ENCODE measurements at regions of chr18 and their contacts with region 1.

Region 1: DNA sequence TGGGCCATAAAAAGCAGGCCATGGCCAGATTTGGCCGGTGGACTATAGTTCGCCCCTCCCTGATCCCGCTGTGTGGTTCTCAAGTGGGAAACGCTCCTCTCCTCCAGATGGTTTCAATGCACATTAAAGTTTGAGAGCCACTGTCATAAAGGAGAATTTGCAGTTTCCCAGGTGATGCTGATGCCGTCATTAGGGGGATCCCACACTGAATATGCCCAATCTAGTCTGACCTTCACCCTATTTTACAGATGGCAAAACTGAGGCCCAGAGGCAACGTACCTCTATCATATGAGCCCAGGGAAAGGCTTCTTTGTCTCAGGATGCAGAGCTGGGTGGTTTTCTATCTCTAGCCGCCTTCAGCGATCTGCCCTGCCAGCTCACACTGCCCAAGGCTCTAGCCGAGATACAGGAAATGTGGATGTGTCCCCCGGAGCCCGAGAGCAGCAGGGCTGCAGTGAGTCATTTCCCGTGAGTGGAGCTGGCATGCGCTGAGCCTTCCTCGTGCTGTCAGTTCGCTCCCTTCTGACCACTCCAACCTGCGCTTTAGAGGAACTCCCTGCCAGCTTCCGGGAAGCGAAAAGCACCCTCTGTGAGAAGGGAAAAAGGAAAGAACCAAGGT is 116.2 kb downstream of the SMAD7 start:
- DNase-seq: peak; percentile 71
- CTCF ChIP-seq: no peak

Region 2: GRCh38 chr18:48680339-48681221 is 153.9 kb before region 1 on chr18:
- CTCF ChIA-PET with region 1: no interaction called
- POLR2A ChIA-PET with region 1: no interaction called
- DNase-seq: no peak
- CTCF ChIP-seq: no peak

Region 3: DNA sequence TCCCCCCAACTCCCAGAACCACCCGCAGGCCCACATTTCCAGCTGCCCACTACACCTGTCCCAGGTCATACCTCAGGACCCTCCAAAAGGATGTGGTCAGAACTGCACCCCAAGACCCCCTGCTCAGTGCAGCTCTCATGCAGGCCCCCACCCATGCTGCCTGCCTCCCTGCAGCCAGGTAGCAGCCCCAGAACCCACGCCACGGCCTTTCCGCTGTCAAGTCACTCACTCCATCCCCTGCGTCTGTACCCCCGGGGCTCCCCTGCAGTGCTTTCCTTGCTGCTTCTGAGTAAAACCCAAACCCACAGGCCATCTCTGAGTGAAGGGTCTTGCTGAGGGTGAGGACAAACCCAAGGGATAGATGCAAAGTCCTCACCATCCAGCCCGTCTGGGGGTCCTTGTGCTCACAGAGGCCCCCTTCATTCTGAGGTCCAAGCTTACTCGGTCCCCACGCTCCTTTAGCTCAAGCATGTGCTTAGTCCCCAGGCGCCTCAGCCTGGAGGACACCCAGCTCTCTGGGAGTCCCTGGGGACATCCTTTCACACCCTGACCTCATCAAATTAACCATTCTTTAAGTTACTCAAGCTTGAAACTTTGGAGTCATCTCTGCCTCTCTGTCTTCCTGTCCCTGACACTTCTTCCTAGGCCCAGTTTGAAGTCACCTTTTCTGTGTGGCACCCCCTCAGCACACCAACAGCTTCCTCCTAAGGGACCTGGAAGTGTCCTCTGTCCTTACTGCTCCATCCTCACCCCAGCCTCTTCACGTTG is 13.9 kb before region 1 on chr18:
- CTCF ChIA-PET with region 1: interaction called, 46 read pairs
- POLR2A ChIA-PET with region 1: interaction called, 4 read pairs
- DNase-seq: peak; percentile 88
- CTCF ChIP-seq: no peak